Dorsolateral prefrontal cortex (tissue), 120 donors: ENCODE measurements at regions of chr13 and their contacts with region 1.

Region 1: DNA sequence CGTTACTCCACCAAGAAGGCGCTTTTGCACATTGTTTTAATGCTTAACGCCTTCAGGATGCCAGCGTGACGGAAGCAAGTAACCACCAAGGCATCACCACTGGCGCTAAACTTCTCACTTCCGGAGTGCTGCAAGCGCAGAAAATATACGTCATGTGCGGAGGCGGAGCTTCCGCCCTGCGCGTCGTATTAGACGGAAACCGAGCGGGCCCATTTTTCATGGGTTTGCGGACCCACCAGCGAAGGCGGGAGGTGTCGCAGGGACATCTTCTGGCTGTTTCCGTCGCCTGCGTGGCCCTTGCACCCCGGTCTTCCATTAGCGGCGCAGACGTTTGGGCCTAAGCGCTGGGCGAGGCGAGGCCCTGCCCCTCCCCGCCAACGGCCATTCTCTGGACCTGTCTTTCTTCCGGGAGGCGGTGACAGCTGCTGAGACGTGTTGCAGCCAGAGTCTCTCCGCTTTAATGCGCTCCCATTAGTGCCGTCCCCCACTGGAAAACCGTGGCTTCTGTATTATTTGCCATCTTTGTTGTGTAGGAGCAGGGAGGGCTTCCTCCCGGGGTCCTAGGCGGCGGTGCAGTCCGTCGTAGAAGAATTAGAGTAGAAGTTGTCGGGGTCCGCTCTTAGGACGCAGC is at the start of gene ERCC5:
- DNase-seq: peak; percentile 86 to 93 (median 90)
- H3K4me3 ChIP-seq: peak within 1 kb of the TSS; percentile 67 to 100 (median 90)
- H3K27ac ChIP-seq: peak within 1 kb of the TSS; percentile 87 to 99 (median 97)
- H3K27me3 ChIP-seq: no peaks in the 10 kb centered on the region
- CTCF ChIP-seq: peak in 46 of 56 donors; percentile 12 to 66 (median 46)
- total RNA-seq, gene ERCC5: 34.1 to 84.8 (median 53.9) TPM

Region 2: DNA sequence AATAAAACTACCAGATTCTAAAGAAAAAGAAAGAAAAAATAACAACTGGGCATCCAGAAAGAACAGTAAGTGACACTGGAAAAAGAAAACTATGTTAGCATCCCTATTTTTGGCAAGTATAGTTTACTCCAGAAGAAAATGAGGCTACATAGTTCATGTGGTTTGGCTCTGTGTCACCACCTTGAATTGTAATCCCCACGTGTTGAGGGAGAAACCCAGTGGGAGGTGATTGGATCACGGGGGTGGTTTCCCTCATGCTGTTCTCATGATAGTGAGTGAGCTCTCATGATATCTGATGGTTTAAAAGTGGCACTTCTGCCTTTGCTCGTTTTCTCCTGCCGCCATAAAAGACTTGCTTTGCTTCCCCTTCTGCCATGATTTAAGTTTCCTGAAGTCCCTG is 1316.3 kb before region 1 on chr13:
- intact Hi-C with region 1: no loop called
- DNase-seq: no peak
- H3K4me3 ChIP-seq: no peak overlapping the region
- H3K27ac ChIP-seq: no peak overlapping the region
- H3K27me3 ChIP-seq: no peaks in the 10 kb centered on the region
- CTCF ChIP-seq: no peak

Region 3: GRCh38 chr13:102394158-102395053 is 451.3 kb before region 1 on chr13:
- intact Hi-C with region 1: loop called in 1 of 2 experiments (anchors 5 kb)
- DNase-seq: peak; percentile 70 to 95 (median 90)
- H3K4me3 ChIP-seq: peak overlapping the region; percentile 61 to 99 (median 91)
- H3K27ac ChIP-seq: peak overlapping the region in 54 of 59 donors; percentile 13 to 88 (median 76)
- H3K27me3 ChIP-seq: no peaks in the 10 kb centered on the region
- CTCF ChIP-seq: peak in 24 of 56 donors; percentile 1 to 35 (median 18)

Region 4: DNA sequence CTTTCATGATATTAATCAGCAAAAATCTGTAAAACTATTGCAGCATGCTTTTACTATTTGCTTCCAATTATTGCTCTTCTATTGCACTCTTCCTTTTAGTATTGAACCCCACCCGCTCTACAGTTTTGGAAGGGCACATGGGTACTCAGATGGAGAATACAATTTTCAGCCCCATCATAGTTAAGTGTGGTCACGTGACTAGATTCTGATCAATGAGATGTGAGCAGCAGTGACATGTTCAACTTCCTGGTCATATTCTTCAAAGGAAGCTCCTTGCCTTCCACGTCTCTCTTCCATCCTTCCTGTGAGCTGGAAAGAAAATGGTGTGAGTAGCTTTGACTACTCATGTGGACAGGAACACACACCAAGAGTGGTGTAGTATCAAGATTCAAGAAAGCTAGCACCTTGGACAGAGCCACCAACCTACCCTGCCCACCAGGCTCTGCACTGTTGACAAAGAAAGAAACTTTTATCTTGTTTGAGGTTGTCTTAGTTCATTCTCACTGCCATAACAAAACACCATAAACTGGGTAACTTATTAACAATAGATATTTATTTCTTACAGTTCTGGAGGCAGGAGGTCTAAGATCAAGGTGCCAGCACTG is 440.1 kb before region 1 on chr13:
- intact Hi-C with region 1: no loop called
- DNase-seq: no peak
- H3K4me3 ChIP-seq: no peak overlapping the region
- H3K27ac ChIP-seq: no peak overlapping the region
- H3K27me3 ChIP-seq: peaks cover 0 to 17% (median 0%) of the 10 kb centered on the region in 45 donors
- CTCF ChIP-seq: no peak

Region 5: DNA sequence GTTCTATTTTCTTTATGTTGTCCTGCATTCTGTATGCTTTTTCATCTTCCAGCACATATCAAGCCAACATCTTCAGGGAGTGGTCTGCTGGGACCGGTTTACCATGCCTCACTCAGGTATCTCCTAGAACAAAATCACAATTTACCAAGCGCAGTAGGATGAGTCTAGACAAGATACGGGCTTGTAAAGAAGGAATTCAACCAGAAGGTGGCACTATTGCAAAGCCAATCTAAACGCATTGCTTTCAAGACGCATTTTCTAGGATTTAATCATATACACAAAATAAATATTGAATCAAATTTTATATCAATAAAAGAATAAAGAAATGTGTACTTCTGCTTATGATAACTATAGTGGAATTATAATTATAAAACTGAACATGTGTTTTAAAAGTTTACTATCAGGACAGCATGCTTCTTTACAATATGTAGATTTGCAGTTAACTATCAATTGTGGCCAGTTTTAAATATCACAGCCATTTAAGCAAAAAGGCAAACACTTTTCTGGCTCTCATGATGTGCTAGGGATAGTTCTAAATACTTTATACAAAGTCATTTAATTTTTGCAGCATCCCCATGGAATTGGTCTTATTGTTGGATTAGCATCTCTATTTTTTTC is 265.1 kb before region 1 on chr13:
- intact Hi-C with region 1: loop called (anchors 2 to 5 kb)
- DNase-seq: peak in 2 of 10 donors; percentile 33 to 42
- H3K4me3 ChIP-seq: no peak overlapping the region
- H3K27ac ChIP-seq: no peak overlapping the region
- H3K27me3 ChIP-seq: no peaks in the 10 kb centered on the region
- CTCF ChIP-seq: peak; percentile 68 to 94 (median 82)

Region 6: GRCh38 chr13:102596147-102597028 is 249.4 kb before region 1 on chr13 and contains the start of gene TPP2:
- intact Hi-C with region 1: loop called (anchors 1 to 5 kb)
- DNase-seq: peak; percentile 98 to 99 (median 99)
- H3K4me3 ChIP-seq: peak within 1 kb of the TSS; percentile 74 to 100 (median 95)
- H3K27ac ChIP-seq: peak within 1 kb of the TSS; percentile 87 to 99 (median 97)
- H3K27me3 ChIP-seq: no peaks in the 10 kb centered on the region
- CTCF ChIP-seq: peak in 16 of 56 donors; percentile 2 to 51 (median 30)
- total RNA-seq, gene TPP2: 21.8 to 51.2 (median 39.7) TPM

Region 7: DNA sequence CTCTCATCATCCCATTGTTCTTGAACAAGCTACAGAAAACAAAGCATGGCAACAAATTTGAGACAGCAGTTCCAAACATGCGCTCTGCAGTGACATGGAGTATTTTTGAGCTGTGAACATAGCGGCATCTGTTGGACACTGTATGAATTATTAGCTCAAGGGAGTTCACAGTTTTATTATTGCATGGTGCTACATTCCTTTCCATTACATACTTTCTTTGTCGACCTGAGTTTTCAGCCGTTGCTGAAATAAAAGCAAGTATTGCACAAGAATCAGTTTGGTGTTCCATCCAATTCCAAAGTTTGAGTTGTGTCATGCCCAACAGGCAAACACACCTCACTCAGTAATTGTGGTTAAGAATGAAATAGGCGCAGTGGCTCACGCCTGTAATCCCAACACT is 120.8 kb before region 1 on chr13:
- intact Hi-C with region 1: loop called in 1 of 2 experiments (anchors 5 kb)
- DNase-seq: no peak
- H3K4me3 ChIP-seq: no peak overlapping the region
- H3K27ac ChIP-seq: peak overlapping the region in 10 of 59 donors; percentile 10 to 55 (median 32)
- H3K27me3 ChIP-seq: no peaks in the 10 kb centered on the region
- CTCF ChIP-seq: peak in 55 of 56 donors; percentile 35 to 78 (median 56)

Region 8: GRCh38 chr13:102773441-102774215 is 72.1 kb before region 1 on chr13 and contains the start of gene TEX30:
- intact Hi-C with region 1: loop called in 1 of 2 experiments (anchors 2 kb)
- DNase-seq: peak; percentile 53 to 93 (median 73)
- H3K4me3 ChIP-seq: peak within 1 kb of the TSS; percentile 59 to 97 (median 86)
- H3K27ac ChIP-seq: peak within 1 kb of the TSS in 57 of 59 donors; percentile 9 to 91 (median 80)
- H3K27me3 ChIP-seq: no peaks in the 10 kb centered on the region
- CTCF ChIP-seq: peak in 43 of 56 donors; percentile 6 to 60 (median 35)
- total RNA-seq, gene TEX30: 3.7 to 14.8 (median 8.6) TPM

Region 9: DNA sequence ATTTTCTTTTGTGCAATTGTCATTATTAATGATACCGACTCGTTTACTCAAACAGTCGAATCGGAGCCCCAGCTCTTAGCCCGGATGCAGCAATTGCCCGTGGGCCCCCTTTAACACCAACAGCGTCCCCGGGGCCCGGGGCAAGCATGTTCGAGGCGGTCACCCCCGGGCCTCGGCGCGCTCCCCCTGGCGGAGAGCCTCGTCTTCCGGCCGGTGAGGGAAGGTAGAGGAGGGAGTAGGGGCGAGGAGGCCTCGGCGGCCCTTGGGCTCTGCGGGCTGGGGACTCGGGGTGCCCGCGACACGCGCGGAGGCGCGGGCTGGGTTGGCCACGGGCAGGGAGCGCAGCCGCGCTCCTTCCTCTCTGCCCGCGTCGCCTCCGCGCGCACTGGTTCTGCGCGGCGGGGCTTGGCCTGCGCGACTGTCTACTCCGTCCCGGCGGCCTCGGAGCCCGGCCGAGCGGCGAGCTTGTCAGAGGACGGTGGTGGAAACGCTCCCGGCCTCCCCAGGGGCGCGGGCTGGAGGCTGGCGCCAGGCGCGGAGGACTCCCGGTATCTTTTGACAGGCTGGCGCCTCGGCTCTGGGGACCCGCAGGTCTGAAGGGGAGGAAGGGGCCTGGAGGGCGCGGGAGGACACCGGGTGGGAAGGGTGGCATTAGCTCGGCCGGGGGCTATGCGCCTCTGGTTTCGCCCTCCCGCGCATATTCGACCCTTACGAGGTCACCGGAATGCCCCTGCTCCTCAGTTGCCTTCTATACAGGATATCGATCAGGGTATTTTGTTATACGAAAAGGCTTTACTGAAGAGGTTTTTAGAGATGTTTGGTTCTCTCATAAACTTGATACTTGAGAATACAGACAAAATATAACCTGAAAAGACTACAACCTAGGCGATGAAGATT is 45.4 kb before region 1 on chr13:
- intact Hi-C with region 1: loop called (anchors 2 kb)
- DNase-seq: peak; percentile 57 to 83 (median 68)
- H3K4me3 ChIP-seq: peak overlapping the region; percentile 66 to 100 (median 90)
- H3K27ac ChIP-seq: peak overlapping the region; percentile 29 to 92 (median 83)
- H3K27me3 ChIP-seq: no peaks in the 10 kb centered on the region
- CTCF ChIP-seq: peak; percentile 38 to 85 (median 66)

Region 10: GRCh38 chr13:102913914-102914313 is 68.2 kb after region 1 on chr13:
- intact Hi-C with region 1: no loop called
- DNase-seq: peak in 1 of 10 donors; percentile 79
- H3K4me3 ChIP-seq: peak overlapping the region in 18 of 59 donors; percentile 1 to 30 (median 22)
- H3K27ac ChIP-seq: peak overlapping the region in 1 of 59 donors; percentile 50
- H3K27me3 ChIP-seq: no peaks in the 10 kb centered on the region
- CTCF ChIP-seq: no peak